ENCODE measurements at regions of chr16 and their contacts with region 1.

Region 1: GRCh38 chr16:67183627-67184328 is at the start of gene MATCAP1:
- DNase-seq: peak; percentile 82
- H3K4me3 ChIP-seq: peak within 1 kb of the TSS; percentile 74
- CTCF ChIP-seq: no peak

Region 2: DNA sequence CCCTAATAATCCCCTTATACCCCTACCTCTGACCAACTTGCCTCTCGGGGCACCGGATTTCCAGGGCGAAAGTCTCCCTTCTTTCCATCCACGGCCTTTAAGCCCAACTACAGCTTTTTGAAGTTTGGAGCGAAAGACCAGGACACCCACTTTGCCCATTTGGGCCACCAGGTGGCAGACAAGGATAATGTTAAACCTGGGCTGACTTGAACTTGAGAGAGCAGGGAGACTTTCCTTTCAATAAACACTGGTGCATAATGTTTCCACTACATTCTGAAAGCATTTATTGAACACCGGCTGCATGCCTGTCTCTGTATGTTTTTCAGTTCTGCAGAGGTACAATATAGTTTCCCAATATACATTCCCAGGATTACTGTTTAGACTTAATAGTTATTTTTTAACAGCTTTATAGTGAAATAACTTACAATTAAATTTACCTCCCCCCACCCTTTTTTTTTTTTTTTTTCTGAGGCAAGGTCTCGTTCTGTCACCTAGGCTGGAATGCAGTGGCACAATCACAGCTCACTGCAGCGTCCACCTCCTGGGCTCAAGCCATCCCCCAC is 229.6 kb before region 1 on chr16:
- CTCF ChIA-PET with region 1: interaction called, 90 read pairs
- POLR2A ChIA-PET with region 1: no interaction called
- DNase-seq: no peak
- H3K4me3 ChIP-seq: no peak overlapping the region
- CTCF ChIP-seq: peak; percentile 78

Region 3: GRCh38 chr16:66961065-66961744 is 222.6 kb before region 1 on chr16 and contains the start of gene CES3:
- CTCF ChIA-PET with region 1: interaction called, 21 read pairs
- POLR2A ChIA-PET with region 1: no interaction called
- DNase-seq: no peak
- H3K4me3 ChIP-seq: no peak within 1 kb of the TSS
- CTCF ChIP-seq: peak; percentile 84

Region 4: DNA sequence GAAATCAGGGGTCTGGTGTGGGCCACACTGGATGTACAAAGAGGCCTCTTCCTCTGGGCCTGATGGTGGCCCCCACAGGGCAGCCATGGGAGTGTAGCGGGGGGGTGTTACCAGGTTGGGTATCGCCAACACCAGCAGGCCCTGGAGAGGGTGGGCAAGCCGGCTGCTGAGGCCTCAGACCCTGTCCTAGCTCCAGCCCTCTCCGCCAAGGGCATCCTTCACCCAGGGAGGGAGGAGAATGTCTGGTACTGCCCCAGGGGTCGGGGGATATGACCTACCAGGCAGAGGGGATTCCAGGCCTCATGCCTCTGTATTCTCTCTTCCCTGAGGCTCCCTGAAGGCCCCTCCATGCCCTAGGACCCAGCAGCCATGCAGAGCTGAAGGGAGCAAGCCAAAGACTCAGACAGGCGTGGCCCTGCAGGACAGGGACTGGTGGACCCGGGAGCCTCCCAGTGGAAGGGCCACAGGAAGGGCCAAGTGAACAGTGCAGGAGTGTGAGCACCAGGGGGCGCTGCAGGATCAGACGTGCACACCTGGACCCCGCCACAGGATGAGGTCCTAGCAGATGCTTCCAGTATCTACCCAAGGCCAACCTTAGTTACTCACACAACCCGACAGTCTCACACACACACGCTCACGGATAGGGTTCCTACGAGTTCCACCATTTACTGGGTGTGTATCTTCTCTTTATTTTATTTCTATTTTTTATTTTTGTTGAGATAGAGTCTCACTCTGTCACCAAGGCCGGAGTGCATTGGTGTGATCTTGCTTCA is 206.3 kb before region 1 on chr16:
- CTCF ChIA-PET with region 1: interaction called, 128 read pairs
- POLR2A ChIA-PET with region 1: no interaction called
- DNase-seq: no peak
- H3K4me3 ChIP-seq: no peak overlapping the region
- CTCF ChIP-seq: peak; percentile 98

Region 5: GRCh38 chr16:67198238-67198734 is 14.5 kb after region 1 on chr16:
- CTCF ChIA-PET with region 1: interaction called, 10 read pairs
- POLR2A ChIA-PET with region 1: no interaction called
- DNase-seq: no peak
- H3K4me3 ChIP-seq: no peak overlapping the region
- CTCF ChIP-seq: peak; percentile 77